ENCODE measurements at regions of chr12 and their contacts with region 1.

Region 1: GRCh38 chr12:31325877-31326631 is at the start of gene SINHCAF:
- DNase-seq: peak; percentile 100
- ATAC-seq: peak; percentile 73
- H3K4me3 Mint-ChIP-seq: peak within 1 kb of the TSS; percentile 99
- H3K27ac Mint-ChIP-seq: peak within 1 kb of the TSS; percentile 99
- H3K4me1 Mint-ChIP-seq: peaks cover 30% of the 10 kb centered on the region
- H3K27me3 Mint-ChIP-seq: no peaks in the 10 kb centered on the region
- CTCF ChIP-seq: no peak
- total RNA-seq, gene SINHCAF: 407 to 438 TPM (median 424 TPM) in 3 replicates

Region 2: GRCh38 chr12:30965613-30965985 is 360.5 kb before region 1 on chr12:
- CTCF ChIA-PET with region 1: no interaction called
- POLR2A ChIA-PET with region 1: no interaction called
- DNase-seq: peak; percentile 60
- ATAC-seq: peak; percentile 77
- H3K4me3 Mint-ChIP-seq: no peak overlapping the region
- H3K27ac Mint-ChIP-seq: no peak overlapping the region
- H3K4me1 Mint-ChIP-seq: peaks cover 8% of the 10 kb centered on the region; the same call in 1 of the 2 replicates
- H3K27me3 Mint-ChIP-seq: no peaks in the 10 kb centered on the region; the same call in 1 of the 2 replicates
- CTCF ChIP-seq: no peak

Region 3: GRCh38 chr12:31315089-31315715 is 10.9 kb before region 1 on chr12:
- CTCF ChIA-PET with region 1: no interaction called
- POLR2A ChIA-PET with region 1: interaction called, 10 read pairs
- DNase-seq: no peak
- ATAC-seq: no peak
- H3K4me3 Mint-ChIP-seq: no peak overlapping the region
- H3K27ac Mint-ChIP-seq: peak overlapping the region; percentile 57
- H3K4me1 Mint-ChIP-seq: peaks cover 86% of the 10 kb centered on the region
- H3K27me3 Mint-ChIP-seq: no peaks in the 10 kb centered on the region
- CTCF ChIP-seq: no peak

Region 4: DNA sequence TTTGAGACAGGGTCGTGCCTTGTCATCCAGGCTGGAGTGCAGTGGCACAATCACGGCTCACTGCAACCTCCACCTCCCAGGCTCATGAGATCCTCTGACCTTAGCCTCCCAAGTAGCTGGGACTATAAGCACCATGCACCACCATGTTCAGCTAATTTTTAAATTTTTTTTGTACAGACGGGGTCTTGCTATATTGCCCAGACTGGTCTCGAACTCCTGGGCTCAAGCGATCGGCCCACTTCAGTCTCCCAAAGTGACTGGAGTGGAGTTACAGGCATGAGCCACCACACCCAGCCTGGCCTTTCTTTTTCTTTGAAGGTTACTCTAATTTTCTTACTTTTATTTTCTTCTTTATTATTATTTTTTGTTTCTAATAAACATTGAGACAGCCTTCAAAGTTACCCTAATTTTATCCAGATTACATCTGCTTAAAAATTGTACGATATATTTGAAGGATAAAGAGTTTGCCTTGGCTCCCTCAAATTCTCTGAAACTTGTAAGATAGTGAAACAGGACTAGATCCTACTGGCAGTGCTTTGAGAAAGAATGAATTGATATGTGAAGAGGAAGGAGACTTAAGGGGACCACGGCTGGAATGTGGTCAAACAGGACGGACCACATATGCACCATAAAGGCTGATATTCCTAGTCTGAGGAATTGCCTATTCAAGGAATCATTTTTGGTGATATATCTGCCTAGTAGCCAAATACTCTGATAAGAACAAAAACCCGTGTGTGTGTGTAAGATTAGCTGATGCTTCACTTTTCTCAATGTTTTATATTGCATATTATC is 14.0 kb after region 1 on chr12:
- CTCF ChIA-PET with region 1: interaction called, 4 read pairs
- POLR2A ChIA-PET with region 1: interaction called, 14 read pairs
- DNase-seq: peak; percentile 51
- ATAC-seq: peak; percentile 84
- H3K4me3 Mint-ChIP-seq: 0 out of 2 replicates have a peak overlapping the region, but pooled peaks have one; percentile 12
- H3K27ac Mint-ChIP-seq: peak overlapping the region; percentile 84
- H3K4me1 Mint-ChIP-seq: peaks cover 32% of the 10 kb centered on the region
- H3K27me3 Mint-ChIP-seq: no peaks in the 10 kb centered on the region
- CTCF ChIP-seq: no peak

Region 5: GRCh38 chr12:31362759-31363415 is 36.8 kb after region 1 on chr12:
- CTCF ChIA-PET with region 1: interaction called, 3 read pairs
- POLR2A ChIA-PET with region 1: interaction called, 24 read pairs
- DNase-seq: peak; percentile 47
- ATAC-seq: peak; percentile 70
- H3K4me3 Mint-ChIP-seq: peak overlapping the region; percentile 29
- H3K27ac Mint-ChIP-seq: peak overlapping the region; percentile 98
- H3K4me1 Mint-ChIP-seq: peaks cover 42% of the 10 kb centered on the region
- H3K27me3 Mint-ChIP-seq: no peaks in the 10 kb centered on the region
- CTCF ChIP-seq: no peak

Region 6: DNA sequence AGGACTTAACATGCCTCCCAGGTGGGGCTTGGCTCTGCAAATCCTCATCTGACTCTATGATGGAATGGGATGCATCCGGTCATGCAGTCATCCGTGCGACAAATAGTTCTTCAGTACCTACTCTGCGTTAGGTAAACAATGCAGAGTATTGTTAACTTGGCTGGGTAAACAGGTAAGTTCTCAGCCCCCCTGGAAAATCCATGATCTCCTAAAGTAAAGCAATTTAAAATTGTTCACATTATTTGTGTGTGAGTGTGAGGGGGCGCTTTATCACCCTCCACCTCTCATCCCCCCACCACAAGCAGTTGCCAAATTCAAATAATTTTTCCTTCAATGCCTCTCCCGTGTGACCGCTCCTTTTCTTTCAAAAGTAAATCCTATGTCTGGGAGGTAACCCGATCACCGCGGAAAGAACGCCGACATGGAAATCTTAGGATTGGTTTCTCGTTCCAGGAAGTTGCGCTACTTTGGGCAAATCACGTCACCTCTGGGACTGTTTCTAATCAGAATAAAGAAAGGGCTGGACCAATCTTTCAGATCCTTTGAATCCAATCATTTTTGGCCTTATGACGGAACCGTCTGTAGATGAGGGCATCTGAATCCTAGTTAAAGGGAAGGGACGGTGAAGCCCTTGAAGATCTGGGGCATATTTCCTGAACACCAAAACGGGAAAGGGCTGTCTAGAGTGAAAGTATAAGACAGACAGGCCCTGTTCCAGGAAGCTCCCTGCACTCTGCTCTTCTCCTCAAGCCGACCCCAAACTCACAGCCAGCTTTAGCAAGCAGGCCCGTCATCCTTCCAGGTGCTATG is 43.9 kb after region 1 on chr12:
- CTCF ChIA-PET with region 1: interaction called, 4 read pairs
- POLR2A ChIA-PET with region 1: interaction called, 50 read pairs
- DNase-seq: peak; percentile 29
- ATAC-seq: peak; percentile 12
- H3K4me3 Mint-ChIP-seq: peak overlapping the region; percentile 70
- H3K27ac Mint-ChIP-seq: peak overlapping the region; percentile 100
- H3K4me1 Mint-ChIP-seq: peaks cover 46% of the 10 kb centered on the region
- H3K27me3 Mint-ChIP-seq: no peaks in the 10 kb centered on the region
- CTCF ChIP-seq: no peak

Region 7: GRCh38 chr12:31387466-31387865 is 61.4 kb after region 1 on chr12:
- CTCF ChIA-PET with region 1: interaction called, 4 read pairs
- POLR2A ChIA-PET with region 1: interaction called, 53 read pairs
- DNase-seq: no peak
- ATAC-seq: peak; percentile 7
- H3K4me3 Mint-ChIP-seq: peak overlapping the region; percentile 69
- H3K27ac Mint-ChIP-seq: peak overlapping the region; percentile 99
- H3K4me1 Mint-ChIP-seq: peaks cover 79% of the 10 kb centered on the region
- H3K27me3 Mint-ChIP-seq: no peaks in the 10 kb centered on the region
- CTCF ChIP-seq: no peak

Measured in WTC11 (cell line).